ENCODE measurements at regions of chr6 and their contacts with region 1.

Region 1: GRCh38 chr6:43506667-43507471 is 3.3 kb downstream of the LRRC73 start:
- DNase-seq: peak; percentile 76
- ATAC-seq: peak; percentile 72
- H3K4me3 Mint-ChIP-seq: no peak overlapping the region
- H3K27ac Mint-ChIP-seq: peak overlapping the region; percentile 35
- H3K4me1 Mint-ChIP-seq: peaks cover 9% of the 10 kb centered on the region
- H3K27me3 Mint-ChIP-seq: peaks cover 18% of the 10 kb centered on the region

Region 2: DNA sequence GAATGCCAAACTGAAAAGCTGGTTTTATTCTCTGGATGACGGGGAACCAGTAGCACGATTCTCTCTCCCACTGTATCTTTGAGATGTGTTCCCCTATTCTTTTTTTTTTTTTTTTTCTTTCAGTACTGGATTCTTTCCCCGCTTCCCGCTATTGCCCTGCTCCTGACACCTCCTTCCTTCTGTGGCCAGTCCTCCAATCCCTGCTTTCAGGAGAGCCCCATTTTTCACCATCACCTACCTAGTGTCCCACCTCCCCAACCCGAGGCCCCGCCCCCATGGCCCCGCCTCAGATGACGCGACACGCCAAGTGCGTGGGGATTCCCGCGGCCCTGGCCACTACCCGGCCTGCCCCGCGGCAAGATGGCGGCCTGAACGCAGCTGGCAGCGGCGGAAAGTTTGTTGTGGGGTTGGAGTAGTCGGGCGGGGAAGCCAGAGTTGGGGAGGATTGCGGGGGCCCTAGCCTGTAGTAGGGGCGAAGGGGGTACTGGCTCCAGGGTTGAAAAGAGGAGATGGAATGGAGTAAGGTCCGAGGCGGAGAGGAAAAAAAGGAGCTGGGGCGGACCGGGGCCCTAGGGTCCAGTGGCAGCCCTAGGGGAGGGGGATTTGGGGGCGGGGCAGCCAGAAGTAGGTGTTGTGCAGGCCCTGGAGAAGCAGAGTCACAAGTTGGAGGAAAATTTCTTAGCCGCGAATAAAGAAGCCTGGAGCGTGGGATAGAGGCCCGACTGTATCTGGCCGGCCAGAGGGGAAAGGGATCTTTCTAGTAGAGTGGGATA is 29.4 kb before region 1 on chr6 and contains the start of gene TJAP1:
- POLR2A ChIA-PET with region 1: interaction called, 12 read pairs
- DNase-seq: peak; percentile 99
- ATAC-seq: peak; percentile 100
- H3K4me3 Mint-ChIP-seq: peak within 1 kb of the TSS; percentile 97
- H3K27ac Mint-ChIP-seq: peak within 1 kb of the TSS; percentile 97
- H3K4me1 Mint-ChIP-seq: peaks cover 37% of the 10 kb centered on the region
- H3K27me3 Mint-ChIP-seq: peaks cover 2% of the 10 kb centered on the region
- total RNA-seq, gene TJAP1: 42.7 to 47.6 TPM

Region 3: GRCh38 chr6:43516697-43517504 is 10.0 kb after region 1 on chr6 and contains the starts of genes POLR1C and YIPF3:
- POLR2A ChIA-PET with region 1: interaction called, 19 read pairs
- DNase-seq: peak; percentile 91
- ATAC-seq: peak; percentile 95
- H3K4me3 Mint-ChIP-seq: no peak within 1 kb of the TSS
- H3K27ac Mint-ChIP-seq: no peak within 1 kb of the TSS
- H3K4me1 Mint-ChIP-seq: peaks cover 17% of the 10 kb centered on the region
- H3K27me3 Mint-ChIP-seq: no peaks in the 10 kb centered on the region
- total RNA-seq, gene POLR1C: 28.8 to 29.7 TPM
- total RNA-seq, gene YIPF3: 63.2 to 71.8 TPM

Measured in activated naive CD8-positive, alpha-beta T cell treated with anti-CD3 and anti-CD28 coated beads, Interleukin-2, amount 10 ng/mL, durations not matched to agents 7 days and 5 days (primary cell).